ENCODE measurements at regions of chr19 and their contacts with region 1.

Region 1: DNA sequence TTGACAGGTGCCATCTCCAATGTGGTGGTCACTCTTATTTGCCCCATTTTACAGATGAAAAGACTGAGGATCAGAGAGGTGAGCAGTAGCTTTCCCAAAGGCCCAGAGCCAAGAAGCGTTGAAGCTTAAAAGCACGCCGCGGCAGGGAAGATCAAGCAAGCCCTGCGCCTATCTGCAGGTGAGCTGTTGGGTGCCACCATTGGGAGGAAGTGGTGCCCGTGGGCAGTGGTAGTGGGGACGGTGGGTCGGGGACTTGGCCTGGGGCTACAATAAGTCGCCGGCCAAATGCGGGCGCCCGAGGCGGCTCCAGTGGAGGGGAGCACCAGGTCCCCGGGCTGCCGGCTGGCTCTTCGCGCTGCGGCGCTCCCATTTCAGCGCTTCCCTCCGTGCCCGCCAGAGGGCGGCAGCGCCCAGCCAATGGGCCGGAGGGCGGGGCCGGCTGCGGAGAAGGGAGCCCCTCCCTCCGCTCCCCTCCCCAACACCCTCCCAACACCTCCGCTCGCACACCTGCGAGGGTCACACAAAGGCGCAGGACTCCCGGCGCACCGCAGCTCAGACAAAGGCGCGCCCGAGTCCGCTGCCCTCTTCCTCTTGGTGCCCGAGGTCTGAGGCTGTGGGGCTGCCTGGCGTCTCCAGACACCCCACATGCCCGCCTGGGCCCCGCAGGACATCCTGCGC is 744 bp upstream of the POU2F2 start:
- DNase-seq: peak; percentile 90
- ATAC-seq: peak; percentile 59
- H3K4me3 Mint-ChIP-seq: peak overlapping the region; percentile 81
- H3K27ac Mint-ChIP-seq: peak overlapping the region; percentile 84
- H3K4me1 Mint-ChIP-seq: peaks cover 56% of the 10 kb centered on the region
- H3K27me3 Mint-ChIP-seq: no peaks in the 10 kb centered on the region

Region 2: DNA sequence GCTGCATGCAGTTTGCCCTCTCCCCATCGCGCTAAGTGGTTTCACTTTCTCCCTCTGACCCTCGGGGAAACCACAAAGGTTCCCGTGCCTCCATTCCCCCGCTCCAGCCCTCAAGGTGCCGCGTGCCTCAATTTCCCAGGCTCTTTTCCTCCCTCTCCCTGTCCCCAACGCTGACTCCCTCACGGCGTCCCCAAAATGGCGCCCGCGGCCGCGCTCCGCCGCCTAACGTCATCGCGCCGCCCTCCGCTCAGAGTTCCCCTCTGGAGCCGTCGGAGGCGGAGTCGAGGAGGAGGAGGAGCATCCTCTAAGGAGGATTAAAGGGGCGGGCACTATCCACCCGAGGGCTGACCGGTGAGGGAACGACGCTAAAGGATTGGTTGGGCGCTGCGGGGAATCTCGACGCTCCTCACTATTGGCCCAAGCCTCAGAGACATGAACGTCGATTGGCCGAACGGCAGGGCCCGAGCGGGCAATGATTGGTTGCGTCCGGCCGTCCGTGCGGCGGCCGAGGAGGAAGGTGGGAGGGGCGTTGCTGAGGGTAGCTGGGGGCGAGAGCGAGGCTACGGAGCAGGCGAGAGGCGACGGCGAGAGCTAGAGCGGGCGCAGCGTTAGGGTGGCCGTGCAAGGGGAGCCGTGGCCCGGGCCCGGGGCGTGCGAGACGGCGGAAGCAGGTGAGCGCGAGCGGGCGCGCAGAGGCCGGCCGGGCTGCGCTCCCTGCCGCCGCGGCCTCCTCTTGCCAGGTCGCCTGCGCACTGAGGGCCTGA is 57.2 kb before region 1 on chr19 and contains the start of gene ZNF574:
- CTCF ChIA-PET with region 1: no interaction called
- POLR2A ChIA-PET with region 1: no interaction called
- intact Hi-C with region 1: loop called in 1 of 2 experiments (anchors 1 kb)
- DNase-seq: peak; percentile 99
- ATAC-seq: peak; percentile 99
- H3K4me3 Mint-ChIP-seq: peak within 1 kb of the TSS; percentile 89
- H3K27ac Mint-ChIP-seq: peak within 1 kb of the TSS; percentile 99
- H3K4me1 Mint-ChIP-seq: peaks cover 27% of the 10 kb centered on the region
- H3K27me3 Mint-ChIP-seq: no peaks in the 10 kb centered on the region
- total RNA-seq, gene ZNF574: 10.7 to 14.8 TPM

Region 3: GRCh38 chr19:42121656-42122069 is 11.3 kb before region 1 on chr19:
- CTCF ChIA-PET with region 1: interaction called, 35 read pairs
- POLR2A ChIA-PET with region 1: no interaction called
- intact Hi-C with region 1: loop called (anchors 1 kb)
- DNase-seq: peak; percentile 93
- ATAC-seq: peak; percentile 81
- H3K4me3 Mint-ChIP-seq: peak overlapping the region; percentile 80
- H3K27ac Mint-ChIP-seq: peak overlapping the region; percentile 94
- H3K4me1 Mint-ChIP-seq: peaks cover 57% of the 10 kb centered on the region
- H3K27me3 Mint-ChIP-seq: no peaks in the 10 kb centered on the region

Region 4: DNA sequence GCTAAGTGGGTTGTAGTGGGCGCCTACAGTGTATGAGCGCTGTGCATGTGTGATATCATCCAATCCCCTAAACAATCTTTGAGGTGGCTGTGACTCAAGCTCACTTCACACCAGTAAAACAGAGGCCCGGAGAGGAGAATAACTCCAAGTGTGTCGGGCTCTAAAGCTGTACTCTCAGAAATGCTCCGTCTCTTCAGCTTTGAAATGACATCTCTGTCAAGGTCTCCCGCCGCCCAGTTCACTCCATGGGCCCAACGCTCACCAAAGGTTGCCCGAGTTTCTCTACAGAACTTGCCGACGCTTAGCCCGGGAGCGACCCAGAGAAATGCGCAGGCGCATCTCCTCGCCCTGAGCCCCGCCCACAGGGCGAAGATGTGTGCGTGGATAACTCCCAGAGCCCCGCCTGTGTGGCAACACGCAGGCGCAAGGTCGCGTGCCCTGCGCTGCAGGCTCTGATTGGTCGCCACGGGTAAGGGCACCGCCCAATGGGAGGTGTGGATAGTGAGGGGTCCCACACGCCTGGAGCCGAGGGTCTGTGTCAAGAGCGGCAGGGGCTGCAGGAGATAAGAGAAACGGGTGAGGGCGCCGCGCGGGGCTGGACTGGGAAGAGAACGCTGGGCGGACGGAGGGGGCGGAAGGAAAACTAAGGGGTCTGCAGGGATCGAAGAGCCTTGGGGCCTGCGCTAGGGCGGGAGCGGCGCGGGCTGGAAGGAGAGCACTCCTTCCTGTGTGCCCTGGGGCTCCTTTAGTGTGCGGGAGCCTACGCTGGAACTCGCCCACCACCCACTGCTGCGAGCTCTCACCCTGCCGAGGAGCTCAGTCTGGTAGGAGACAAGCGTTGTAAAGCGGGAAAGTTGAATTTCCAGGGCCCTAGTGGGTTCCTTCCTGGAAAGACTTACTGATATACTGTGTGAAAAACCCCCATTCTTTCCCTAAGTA is 87.1 kb after region 1 on chr19 and contains the start of gene ZNF526:
- CTCF ChIA-PET with region 1: interaction called, 5 read pairs
- POLR2A ChIA-PET with region 1: no interaction called
- intact Hi-C with region 1: loop called (anchors 1 kb)
- DNase-seq: peak; percentile 98
- ATAC-seq: peak; percentile 83
- H3K4me3 Mint-ChIP-seq: peak within 1 kb of the TSS; percentile 85
- H3K27ac Mint-ChIP-seq: peak within 1 kb of the TSS; percentile 90
- H3K4me1 Mint-ChIP-seq: peaks cover 50% of the 10 kb centered on the region
- H3K27me3 Mint-ChIP-seq: no peaks in the 10 kb centered on the region
- total RNA-seq, gene ZNF526: 11.9 to 15.2 TPM

Region 5: DNA sequence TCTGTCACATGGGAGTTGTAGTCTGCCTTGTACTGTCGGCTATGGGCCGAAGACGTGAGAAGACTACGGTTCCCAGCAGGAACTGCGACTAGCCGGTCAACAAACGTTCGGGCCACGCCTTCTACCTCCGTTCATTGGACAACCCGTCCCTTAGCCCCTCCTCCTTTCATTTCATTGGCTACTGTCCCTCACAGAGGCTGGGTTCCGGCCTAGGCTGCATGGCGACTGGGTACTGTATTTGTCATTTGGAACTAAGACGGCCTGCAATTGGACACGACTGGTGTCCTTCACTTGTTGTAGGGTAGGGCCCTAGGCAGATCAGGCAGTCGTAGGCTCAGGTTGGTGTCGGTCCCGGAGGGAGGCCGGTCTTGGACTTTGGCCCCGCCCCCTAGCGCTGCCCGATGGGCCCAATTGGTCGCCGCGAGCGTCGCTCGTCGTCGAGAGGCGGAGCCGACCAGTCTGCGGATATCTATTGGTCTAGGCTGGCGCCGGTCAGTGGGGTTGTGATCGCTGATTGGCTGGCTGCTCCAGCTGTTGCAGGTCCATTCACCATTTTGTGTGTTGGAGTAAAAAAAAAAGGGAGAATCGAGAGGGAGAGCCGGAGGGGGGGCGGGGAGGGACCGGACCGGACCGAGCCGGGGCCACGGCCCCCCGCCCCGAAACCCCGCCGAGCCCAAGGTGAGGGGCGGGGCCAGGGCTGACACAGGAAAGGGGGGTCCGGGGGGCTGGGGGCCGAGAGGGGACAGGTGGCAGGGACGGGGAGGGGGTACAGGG is 135.9 kb after region 1 on chr19 and contains the start of gene CIC:
- CTCF ChIA-PET with region 1: interaction called, 3 read pairs
- POLR2A ChIA-PET with region 1: no interaction called
- intact Hi-C with region 1: loop called in 1 of 2 experiments (anchors 1 kb)
- DNase-seq: peak; percentile 100
- ATAC-seq: peak; percentile 87
- H3K4me3 Mint-ChIP-seq: no peak within 1 kb of the TSS
- H3K27ac Mint-ChIP-seq: peak within 1 kb of the TSS; percentile 97
- H3K4me1 Mint-ChIP-seq: peaks cover 24% of the 10 kb centered on the region
- H3K27me3 Mint-ChIP-seq: no peaks in the 10 kb centered on the region
- total RNA-seq, gene CIC: 62.8 to 66.3 TPM

Region 6: GRCh38 chr19:42301656-42302203 is 168.7 kb after region 1 on chr19 and contains the start of gene PRR19:
- CTCF ChIA-PET with region 1: interaction called, 6 read pairs
- POLR2A ChIA-PET with region 1: no interaction called
- intact Hi-C with region 1: loop called (anchors 1 kb)
- DNase-seq: peak; percentile 50
- ATAC-seq: peak; percentile 25
- H3K4me3 Mint-ChIP-seq: peak within 1 kb of the TSS; percentile 83
- H3K27ac Mint-ChIP-seq: peak within 1 kb of the TSS; percentile 85
- H3K4me1 Mint-ChIP-seq: peaks cover 19% of the 10 kb centered on the region
- H3K27me3 Mint-ChIP-seq: no peaks in the 10 kb centered on the region
- total RNA-seq, gene PRR19: 0.63 to 1.0 TPM

Region 7: GRCh38 chr19:42401365-42402303 is 268.6 kb after region 1 on chr19:
- CTCF ChIA-PET with region 1: interaction called, 4 read pairs
- POLR2A ChIA-PET with region 1: no interaction called
- intact Hi-C with region 1: loop called in 1 of 2 experiments (anchors 1 kb)
- DNase-seq: peak; percentile 84
- ATAC-seq: peak; percentile 53
- H3K4me3 Mint-ChIP-seq: peak overlapping the region; percentile 71
- H3K27ac Mint-ChIP-seq: peak overlapping the region; percentile 25
- H3K4me1 Mint-ChIP-seq: peaks cover 24% of the 10 kb centered on the region
- H3K27me3 Mint-ChIP-seq: no peaks in the 10 kb centered on the region